ENCODE measurements at regions of chr9 and their contacts with region 1.

Region 1: GRCh38 chr9:97501177-97501971 is at the start of gene TMOD1:
- DNase-seq: peak; percentile 56
- H3K4me3 Mint-ChIP-seq: peak within 1 kb of the TSS; percentile 65
- H3K27ac Mint-ChIP-seq: no peak within 1 kb of the TSS
- H3K4me1 Mint-ChIP-seq: peaks cover 15% of the 10 kb centered on the region
- H3K27me3 Mint-ChIP-seq: peaks cover 42% of the 10 kb centered on the region
- total RNA-seq, gene TMOD1: 1.7 to 2.5 TPM

Region 2: DNA sequence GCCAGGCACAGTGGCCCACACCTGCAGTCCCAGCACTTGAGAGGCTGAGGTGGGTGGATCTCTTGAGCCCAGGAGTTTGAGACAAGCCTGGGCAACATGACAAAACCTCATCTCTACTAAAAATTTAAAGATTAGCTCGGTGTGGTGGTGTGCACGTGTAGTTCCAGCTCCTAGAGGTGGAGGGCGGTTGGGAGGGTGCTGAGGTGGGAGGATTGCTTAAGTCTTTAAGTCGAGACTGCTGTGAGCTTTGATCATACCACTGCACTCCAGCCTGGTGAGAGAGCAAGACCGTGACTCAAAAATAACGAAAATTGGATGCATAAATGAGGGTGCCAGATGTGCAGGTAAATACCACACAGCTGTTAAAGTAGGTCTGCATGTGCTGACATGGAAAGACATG is 128.8 kb before region 1 on chr9:
- CTCF ChIA-PET with region 1: no interaction called
- POLR2A ChIA-PET with region 1: no interaction called
- intact Hi-C with region 1: no loop called
- DNase-seq: no peak
- H3K4me3 Mint-ChIP-seq: no peak overlapping the region
- H3K27ac Mint-ChIP-seq: no peak overlapping the region
- H3K4me1 Mint-ChIP-seq: no peaks in the 10 kb centered on the region
- H3K27me3 Mint-ChIP-seq: no peaks in the 10 kb centered on the region

Region 3: GRCh38 chr9:97411789-97412625 is 89.4 kb before region 1 on chr9 and contains the start of gene TDRD7:
- CTCF ChIA-PET with region 1: no interaction called
- POLR2A ChIA-PET with region 1: no interaction called
- intact Hi-C with region 1: loop called (anchors 5 kb)
- DNase-seq: peak; percentile 92
- H3K4me3 Mint-ChIP-seq: peak within 1 kb of the TSS; percentile 82
- H3K27ac Mint-ChIP-seq: peak within 1 kb of the TSS; percentile 61
- H3K4me1 Mint-ChIP-seq: peaks cover 23% of the 10 kb centered on the region
- H3K27me3 Mint-ChIP-seq: peaks cover 11% of the 10 kb centered on the region
- total RNA-seq, gene TDRD7: 12.3 to 12.5 TPM

Region 4: DNA sequence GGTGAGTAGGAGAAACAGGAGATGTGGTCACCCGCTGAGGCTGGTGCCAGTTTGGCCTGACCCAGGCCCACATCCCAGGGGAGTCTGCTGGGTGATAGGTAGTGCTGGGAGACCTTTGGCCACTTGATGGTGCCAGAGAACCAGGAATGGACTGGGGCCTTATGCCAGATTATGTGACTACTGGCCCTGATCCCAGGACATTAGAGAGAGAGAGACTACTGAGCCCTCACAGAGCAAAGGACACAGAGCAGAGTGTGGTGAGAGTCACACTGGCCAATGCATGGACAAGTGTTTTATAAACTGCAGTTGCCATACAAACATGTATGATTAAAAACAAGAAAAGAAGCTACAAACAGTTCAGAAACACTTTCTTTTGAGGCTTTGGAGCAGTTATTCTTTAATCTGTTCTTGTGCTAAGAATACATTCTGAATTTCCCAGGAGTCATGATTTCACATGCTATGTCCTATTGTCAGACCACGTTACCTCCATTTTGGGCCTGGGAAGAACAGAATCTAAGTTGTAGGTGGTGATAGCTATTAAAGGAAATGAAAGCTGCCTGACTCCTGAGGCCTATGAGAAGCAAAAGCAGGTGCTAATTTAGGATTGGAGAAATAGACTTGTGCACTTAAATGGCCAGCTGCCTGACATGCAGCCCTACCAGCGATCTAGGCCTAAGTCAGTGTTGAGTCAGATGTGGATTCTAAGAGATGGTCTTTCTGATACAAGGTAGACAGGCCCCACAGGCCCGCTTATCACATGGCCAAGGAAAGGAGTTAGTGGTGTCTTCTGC is 32.5 kb before region 1 on chr9:
- CTCF ChIA-PET with region 1: interaction called, 15 read pairs
- POLR2A ChIA-PET with region 1: no interaction called
- intact Hi-C with region 1: no loop called
- DNase-seq: peak; percentile 63
- H3K4me3 Mint-ChIP-seq: no peak overlapping the region
- H3K27ac Mint-ChIP-seq: no peak overlapping the region
- H3K4me1 Mint-ChIP-seq: no peaks in the 10 kb centered on the region
- H3K27me3 Mint-ChIP-seq: no peaks in the 10 kb centered on the region

Measured in activated CD4-positive, alpha-beta memory T cell treated with anti-CD3 and anti-CD28 coated beads for 36 hours (primary cell).